BJ (cell line): ENCODE measurements at regions of chr2 and their contacts with region 1.

Region 1: GRCh38 chr2:64052468-64053241 is 33.4 kb upstream of the VPS54 start:
- DNase-seq: no peak
- H3K4me3 ChIP-seq: no peak overlapping the region
- H3K27me3 ChIP-seq: no peaks in the 10 kb centered on the region; the same call in 1 of the 2 replicates
- CTCF ChIP-seq: no peak

Region 2: DNA sequence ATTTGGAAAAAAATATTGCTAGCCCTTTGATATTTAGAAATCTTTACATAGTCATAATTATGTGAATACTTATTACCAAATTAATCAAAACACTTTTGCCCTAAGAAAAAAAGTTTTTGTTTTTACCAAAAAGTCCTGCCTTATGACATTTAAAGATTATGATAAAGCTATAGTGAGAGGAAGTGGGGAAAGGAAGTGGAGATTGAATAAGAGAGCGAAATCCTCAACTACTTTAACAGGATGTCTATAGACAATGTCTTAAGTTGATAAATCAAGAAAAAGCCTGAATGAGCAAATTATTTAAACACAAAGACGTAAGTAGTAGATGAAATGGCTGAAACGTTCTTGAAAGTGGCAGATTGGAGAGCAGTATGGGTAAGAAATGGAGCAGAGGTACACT is 12.5 kb before region 1 on chr2:
- CTCF ChIA-PET with region 1: interaction called, 12 read pairs
- POLR2A ChIA-PET with region 1: no interaction called
- DNase-seq: no peak
- H3K4me3 ChIP-seq: no peak overlapping the region
- H3K27me3 ChIP-seq: no peaks in the 10 kb centered on the region
- CTCF ChIP-seq: no peak

Region 3: DNA sequence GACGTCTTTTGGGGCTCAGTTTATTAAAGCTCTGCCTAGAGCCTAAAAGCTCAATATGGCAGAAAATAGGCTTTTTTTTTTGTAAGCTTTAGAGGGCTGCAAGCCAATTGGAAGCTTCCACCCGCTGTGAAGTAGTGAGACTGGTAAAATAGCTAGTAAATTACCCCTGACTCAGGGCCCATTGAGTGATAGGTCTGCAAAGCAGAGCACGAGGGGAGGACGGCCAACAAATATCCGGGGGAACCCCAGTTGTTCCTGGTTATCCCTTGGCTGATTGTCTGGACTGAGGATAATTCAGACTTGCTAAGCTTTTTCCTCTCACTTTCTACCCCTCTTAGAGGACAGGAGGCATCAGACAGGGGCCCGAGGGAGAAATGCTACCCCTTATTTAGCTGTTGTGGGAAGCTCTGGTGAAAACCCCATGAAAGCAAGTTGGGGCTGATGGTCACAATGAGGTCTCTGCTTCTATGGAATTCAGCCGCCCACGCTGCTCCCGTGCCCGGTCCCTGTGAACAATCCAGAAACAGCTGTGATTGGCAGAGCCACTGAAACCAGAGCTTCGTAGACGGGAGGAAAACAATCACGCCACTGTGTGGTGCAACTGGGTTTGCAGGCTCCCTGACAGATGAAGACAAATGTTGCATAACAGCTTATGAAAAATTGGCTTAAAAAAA is 259.4 kb after region 1 on chr2:
- CTCF ChIA-PET with region 1: interaction called, 72 read pairs
- POLR2A ChIA-PET with region 1: no interaction called
- DNase-seq: peak; percentile 62
- H3K4me3 ChIP-seq: no peak overlapping the region
- H3K27me3 ChIP-seq: peaks cover 15% of the 10 kb centered on the region
- CTCF ChIP-seq: peak; percentile 71

Region 4: GRCh38 chr2:64318476-64318748 is 265.8 kb after region 1 on chr2:
- CTCF ChIA-PET with region 1: interaction called, 72 read pairs
- POLR2A ChIA-PET with region 1: no interaction called
- DNase-seq: no peak
- H3K4me3 ChIP-seq: no peak overlapping the region
- H3K27me3 ChIP-seq: peaks cover 21% of the 10 kb centered on the region
- CTCF ChIP-seq: no peak